CD4-positive, alpha-beta T cell (primary cell): ENCODE measurements at regions of chr22 and their contacts with region 1.

Region 1: GRCh38 chr22:35914665-35915476 is 113.8 kb downstream of the RBFOX2 start:
- DNase-seq: peak in 4 of 14 experiments; percentile 5 to 38 (median 25)
- ATAC-seq: peak; percentile 67
- H3K4me3 ChIP-seq: no peak overlapping the region
- H3K4me3 Mint-ChIP-seq: peak overlapping the region; percentile 70
- H3K27ac ChIP-seq: no peak overlapping the region
- H3K27ac Mint-ChIP-seq: peak overlapping the region; percentile 31
- H3K4me1 ChIP-seq: no peaks in the 10 kb centered on the region
- H3K4me1 Mint-ChIP-seq: peaks cover 18% of the 10 kb centered on the region
- H3K27me3 ChIP-seq: peaks cover 0 to 9% of the 10 kb centered on the region in 2 experiments
- H3K27me3 Mint-ChIP-seq: no peaks in the 10 kb centered on the region
- CTCF ChIP-seq: no peak

Region 2: DNA sequence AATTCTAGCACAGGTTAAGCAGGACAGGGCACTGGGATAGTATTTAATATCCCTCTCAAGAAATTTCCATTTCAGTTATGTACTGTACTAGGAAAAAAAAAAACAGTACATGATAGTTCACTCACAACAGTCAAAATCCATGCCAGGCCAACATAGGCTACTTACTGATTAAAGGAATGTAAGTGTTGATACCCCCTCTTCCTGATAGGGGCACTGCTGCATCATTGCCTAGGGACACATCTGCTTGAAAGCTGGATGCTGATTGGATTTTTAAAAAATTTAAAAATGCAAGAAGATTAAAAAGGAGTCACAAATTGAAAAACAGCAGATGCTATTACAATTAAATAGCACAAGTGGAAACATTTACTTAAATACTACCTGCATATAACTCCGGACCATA is 153.8 kb before region 1 on chr22:
- CTCF ChIA-PET with region 1: no interaction called
- POLR2A ChIA-PET with region 1: no interaction called
- intact Hi-C with region 1: loop called in 1 of 2 experiments (anchors 10 kb)
- DNase-seq: no peak
- ATAC-seq: no peak
- H3K4me3 ChIP-seq: no peak overlapping the region
- H3K4me3 Mint-ChIP-seq: no peak overlapping the region
- H3K27ac ChIP-seq: no peak overlapping the region
- H3K27ac Mint-ChIP-seq: no peak overlapping the region
- H3K4me1 ChIP-seq: no peaks in the 10 kb centered on the region
- H3K4me1 Mint-ChIP-seq: no peaks in the 10 kb centered on the region
- H3K27me3 ChIP-seq: no peaks in the 10 kb centered on the region
- H3K27me3 Mint-ChIP-seq: no peaks in the 10 kb centered on the region
- CTCF ChIP-seq: no peak